ENCODE measurements at regions of chr6 and their contacts with region 1.

Region 1: GRCh38 chr6:109009236-109009961 is 85.2 kb downstream of the SESN1 start:
- DNase-seq: peak; percentile 83 to 96 (median 93)
- ATAC-seq: peak; percentile 96
- H3K4me3 ChIP-seq: peak overlapping the region; percentile 72 to 94
- H3K4me3 Mint-ChIP-seq: peak overlapping the region; percentile 98
- H3K27ac ChIP-seq: peak overlapping the region; percentile 89 to 92
- H3K27ac Mint-ChIP-seq: peak overlapping the region; percentile 100
- H3K4me1 ChIP-seq: peaks cover 53% of the 10 kb centered on the region
- H3K4me1 Mint-ChIP-seq: peaks cover 71% of the 10 kb centered on the region
- H3K27me3 ChIP-seq: no peaks in the 10 kb centered on the region
- H3K27me3 Mint-ChIP-seq: no peaks in the 10 kb centered on the region
- CTCF ChIP-seq: no peak

Region 2: GRCh38 chr6:107957909-107958688 is 1051.3 kb before region 1 on chr6 and contains the start of gene SEC63:
- CTCF ChIA-PET with region 1: no interaction called
- POLR2A ChIA-PET with region 1: no interaction called
- intact Hi-C with region 1: loop called in 1 of 2 experiments (anchors 5 kb)
- DNase-seq: peak; percentile 95 to 98 (median 96)
- ATAC-seq: peak; percentile 97
- H3K4me3 ChIP-seq: peak within 1 kb of the TSS; percentile 91
- H3K4me3 Mint-ChIP-seq: peak within 1 kb of the TSS; percentile 98
- H3K27ac ChIP-seq: peak within 1 kb of the TSS; percentile 81 to 82
- H3K27ac Mint-ChIP-seq: peak within 1 kb of the TSS; percentile 92
- H3K4me1 ChIP-seq: peaks cover 16% of the 10 kb centered on the region
- H3K4me1 Mint-ChIP-seq: peaks cover 37% of the 10 kb centered on the region
- H3K27me3 ChIP-seq: no peaks in the 10 kb centered on the region
- H3K27me3 Mint-ChIP-seq: no peaks in the 10 kb centered on the region
- CTCF ChIP-seq: no peak
- total RNA-seq, gene SEC63: 77.8 to 88.2 TPM

Region 3: GRCh38 chr6:108558372-108559096 is 450.9 kb before region 1 on chr6:
- CTCF ChIA-PET with region 1: no interaction called
- POLR2A ChIA-PET with region 1: interaction called, 3 read pairs
- intact Hi-C with region 1: loop called (anchors 1 to 2 kb)
- DNase-seq: peak; percentile 92 to 100 (median 96)
- ATAC-seq: peak; percentile 68
- H3K4me3 ChIP-seq: peak overlapping the region; percentile 92 to 97
- H3K4me3 Mint-ChIP-seq: peak overlapping the region; percentile 97
- H3K27ac ChIP-seq: peak overlapping the region; percentile 87 to 99
- H3K27ac Mint-ChIP-seq: peak overlapping the region; percentile 99
- H3K4me1 ChIP-seq: peaks cover 16% of the 10 kb centered on the region
- H3K4me1 Mint-ChIP-seq: peaks cover 24% of the 10 kb centered on the region
- H3K27me3 ChIP-seq: no peaks in the 10 kb centered on the region
- H3K27me3 Mint-ChIP-seq: peaks cover 2% of the 10 kb centered on the region
- CTCF ChIP-seq: no peak

Region 4: DNA sequence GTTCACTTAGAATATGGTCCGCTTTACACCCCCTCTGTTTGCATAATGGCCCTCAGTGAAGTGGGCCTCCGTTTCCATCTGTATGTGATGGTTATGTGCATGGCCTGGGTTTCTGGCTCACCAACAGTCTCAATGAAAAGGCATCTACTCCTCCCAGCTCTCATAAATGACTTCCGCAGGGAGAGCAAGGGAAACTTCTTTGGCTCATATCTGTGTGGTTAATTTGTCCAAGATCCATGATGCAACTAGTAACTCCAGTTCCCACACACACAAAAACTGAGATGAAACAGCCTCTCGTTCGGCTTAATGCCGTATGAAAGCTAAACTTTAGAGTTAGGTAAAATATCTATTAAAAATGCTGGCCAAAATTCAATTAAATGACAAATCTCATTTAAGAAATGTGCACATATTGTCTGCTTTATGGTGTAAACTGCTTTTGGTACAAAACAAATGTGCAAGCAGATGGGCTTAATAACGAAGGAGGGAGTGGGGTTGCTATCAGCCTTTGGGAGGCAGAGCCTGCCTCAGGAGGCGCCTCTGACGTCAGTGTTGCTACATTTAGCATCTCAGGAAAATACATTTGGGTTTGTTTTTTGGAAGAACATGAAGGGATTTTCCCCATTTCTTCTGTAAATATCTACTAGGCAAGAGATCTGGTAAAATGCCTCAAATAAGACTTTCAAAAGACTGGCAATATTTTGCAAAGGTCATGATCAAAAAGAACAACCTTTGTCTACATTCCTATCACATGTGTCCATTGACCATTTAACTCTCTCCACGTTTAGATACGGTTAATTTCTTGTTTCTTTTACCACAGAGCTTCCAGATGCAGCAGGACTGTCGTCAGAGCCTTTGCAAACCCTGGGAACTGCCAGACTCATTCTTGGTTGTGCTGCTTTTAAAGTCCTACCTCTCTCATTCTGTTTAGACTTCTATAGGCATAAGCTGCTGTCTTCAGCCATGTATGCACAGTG is 64.4 kb before region 1 on chr6:
- CTCF ChIA-PET with region 1: no interaction called
- POLR2A ChIA-PET with region 1: no interaction called
- intact Hi-C with region 1: loop called in 1 of 2 experiments (anchors 2 kb)
- DNase-seq: no peak
- ATAC-seq: no peak
- H3K4me3 ChIP-seq: no peak overlapping the region
- H3K4me3 Mint-ChIP-seq: no peak overlapping the region
- H3K27ac ChIP-seq: no peak overlapping the region
- H3K27ac Mint-ChIP-seq: peak overlapping the region; percentile 37
- H3K4me1 ChIP-seq: peaks cover 27% of the 10 kb centered on the region
- H3K4me1 Mint-ChIP-seq: peaks cover 48% of the 10 kb centered on the region
- H3K27me3 ChIP-seq: no peaks in the 10 kb centered on the region
- H3K27me3 Mint-ChIP-seq: no peaks in the 10 kb centered on the region
- CTCF ChIP-seq: no peak

Region 5: GRCh38 chr6:108983151-108983550 is 26.2 kb before region 1 on chr6:
- CTCF ChIA-PET with region 1: no interaction called
- POLR2A ChIA-PET with region 1: no interaction called
- intact Hi-C with region 1: no loop called
- DNase-seq: no peak
- ATAC-seq: no peak
- H3K4me3 ChIP-seq: no peak overlapping the region
- H3K4me3 Mint-ChIP-seq: no peak overlapping the region
- H3K27ac ChIP-seq: no peak overlapping the region
- H3K27ac Mint-ChIP-seq: no peak overlapping the region
- H3K4me1 ChIP-seq: no peaks in the 10 kb centered on the region
- H3K4me1 Mint-ChIP-seq: no peaks in the 10 kb centered on the region
- H3K27me3 ChIP-seq: no peaks in the 10 kb centered on the region
- H3K27me3 Mint-ChIP-seq: no peaks in the 10 kb centered on the region
- CTCF ChIP-seq: no peak

Region 6: GRCh38 chr6:109187399-109188114 is 178.2 kb after region 1 on chr6:
- CTCF ChIA-PET with region 1: no interaction called
- POLR2A ChIA-PET with region 1: no interaction called
- intact Hi-C with region 1: loop called in 1 of 2 experiments (anchors 10 kb)
- DNase-seq: peak; percentile 24 to 75 (median 64)
- ATAC-seq: peak; percentile 96
- H3K4me3 ChIP-seq: no peak overlapping the region
- H3K4me3 Mint-ChIP-seq: no peak overlapping the region
- H3K27ac ChIP-seq: no peak overlapping the region
- H3K27ac Mint-ChIP-seq: no peak overlapping the region
- H3K4me1 ChIP-seq: no peaks in the 10 kb centered on the region
- H3K4me1 Mint-ChIP-seq: peaks cover 2% of the 10 kb centered on the region
- H3K27me3 ChIP-seq: peaks cover 3 to 6% of the 10 kb centered on the region in 2 experiments
- H3K27me3 Mint-ChIP-seq: peaks cover 11% of the 10 kb centered on the region
- CTCF ChIP-seq: peak; percentile 88

Region 7: DNA sequence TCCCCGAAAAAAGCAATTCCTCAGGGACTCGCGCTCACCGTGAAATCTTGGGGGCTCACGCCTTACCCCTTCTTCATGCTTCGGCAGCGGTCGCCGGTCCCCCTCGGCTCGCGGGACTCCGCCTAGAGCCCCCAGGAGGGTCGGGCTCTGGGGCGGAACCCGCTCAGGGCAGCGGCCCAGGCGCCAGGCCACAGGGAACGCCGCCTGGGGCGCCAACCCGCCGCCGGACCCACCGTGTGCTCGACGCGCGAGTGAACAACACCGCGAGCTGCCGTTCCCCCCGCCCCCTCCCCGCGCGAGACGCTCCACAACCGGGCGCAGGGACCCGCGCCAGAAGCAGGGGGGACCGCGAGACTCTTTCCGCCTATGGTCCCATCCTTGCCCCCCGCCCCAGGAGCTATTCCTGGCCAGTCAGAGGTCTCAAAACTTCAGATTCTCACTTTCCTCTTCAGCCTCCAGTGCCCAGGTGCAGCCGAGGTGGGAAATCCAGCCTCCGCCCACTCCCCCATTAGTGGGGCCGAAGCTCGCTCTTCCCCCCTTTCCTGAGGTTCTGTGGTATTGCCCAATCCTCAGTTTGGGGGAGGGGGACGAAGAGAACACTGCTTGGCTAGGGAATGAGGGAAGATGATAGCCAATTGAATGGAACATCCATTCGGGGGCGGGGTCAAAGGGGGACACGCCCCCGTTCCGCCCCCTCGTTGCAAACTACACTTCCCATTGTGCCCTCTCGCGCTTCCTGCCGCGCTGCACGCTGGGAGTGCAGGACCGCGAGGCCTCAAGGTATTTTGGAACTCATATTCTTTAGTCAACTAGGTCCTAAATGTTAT is 1170.2 kb after region 1 on chr6 and contains the start of gene WASF1:
- CTCF ChIA-PET with region 1: no interaction called
- POLR2A ChIA-PET with region 1: no interaction called
- intact Hi-C with region 1: loop called in 1 of 2 experiments (anchors 5 kb)
- DNase-seq: peak; percentile 77 to 95 (median 89)
- ATAC-seq: peak; percentile 84
- H3K4me3 ChIP-seq: peak within 1 kb of the TSS; percentile 83 to 96
- H3K4me3 Mint-ChIP-seq: peak within 1 kb of the TSS; percentile 77
- H3K27ac ChIP-seq: peak within 1 kb of the TSS; percentile 72 to 79
- H3K27ac Mint-ChIP-seq: peak within 1 kb of the TSS; percentile 38
- H3K4me1 ChIP-seq: peaks cover 28% of the 10 kb centered on the region
- H3K4me1 Mint-ChIP-seq: peaks cover 7% of the 10 kb centered on the region
- H3K27me3 ChIP-seq: no peaks in the 10 kb centered on the region
- H3K27me3 Mint-ChIP-seq: peaks cover 9% of the 10 kb centered on the region
- CTCF ChIP-seq: no peak
- total RNA-seq, gene WASF1: 1.1 to 1.7 TPM